AG04449 (cell line): ENCODE measurements at regions of chr9 and their contacts with region 1.

Region 1: GRCh38 chr9:124617471-124618141 is 110.4 kb upstream of the NR5A1 start:
- DNase-seq: no peak
- H3K4me3 ChIP-seq: no peak overlapping the region
- CTCF ChIP-seq: peak; percentile 88

Region 2: DNA sequence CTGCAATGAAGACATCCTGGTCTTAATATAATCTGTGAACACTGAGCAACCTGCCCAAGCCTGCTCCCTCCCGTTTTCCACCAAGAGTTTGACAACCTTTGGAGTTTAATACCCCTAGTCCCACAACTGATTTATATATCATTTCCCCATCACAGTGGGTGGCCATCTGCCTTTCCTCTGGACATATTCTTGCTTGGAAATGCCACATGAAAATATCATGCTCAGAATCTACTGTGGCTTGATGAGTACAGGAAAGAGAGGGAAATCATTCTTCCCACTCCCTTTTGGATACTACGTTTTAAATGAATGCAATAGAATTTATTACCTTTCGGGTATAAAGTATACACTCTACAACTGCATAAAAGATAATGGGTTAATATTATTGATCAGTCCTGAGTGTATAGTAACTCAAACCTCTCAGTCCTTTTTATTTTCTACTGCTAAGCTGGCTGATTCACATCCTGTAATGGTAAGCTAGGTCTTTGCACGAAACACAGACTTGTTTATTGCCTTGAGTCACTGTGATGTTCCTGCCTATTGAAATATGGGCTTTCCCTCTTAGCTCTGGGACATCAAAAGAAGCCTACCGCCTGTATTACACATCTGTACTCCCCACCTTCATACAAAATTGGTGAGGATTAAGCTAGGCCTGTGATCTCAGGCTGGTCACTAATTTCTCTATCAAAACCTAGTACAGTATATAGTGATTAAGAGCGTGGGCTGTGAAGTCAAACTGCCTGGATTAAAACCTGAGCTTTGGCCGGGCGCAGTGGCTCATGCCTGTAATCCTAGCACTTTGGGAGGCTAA is 42.9 kb before region 1 on chr9:
- CTCF ChIA-PET with region 1: interaction called, 23 read pairs
- POLR2A ChIA-PET with region 1: no interaction called
- DNase-seq: peak; percentile 45
- H3K4me3 ChIP-seq: no peak overlapping the region
- CTCF ChIP-seq: no peak

Region 3: DNA sequence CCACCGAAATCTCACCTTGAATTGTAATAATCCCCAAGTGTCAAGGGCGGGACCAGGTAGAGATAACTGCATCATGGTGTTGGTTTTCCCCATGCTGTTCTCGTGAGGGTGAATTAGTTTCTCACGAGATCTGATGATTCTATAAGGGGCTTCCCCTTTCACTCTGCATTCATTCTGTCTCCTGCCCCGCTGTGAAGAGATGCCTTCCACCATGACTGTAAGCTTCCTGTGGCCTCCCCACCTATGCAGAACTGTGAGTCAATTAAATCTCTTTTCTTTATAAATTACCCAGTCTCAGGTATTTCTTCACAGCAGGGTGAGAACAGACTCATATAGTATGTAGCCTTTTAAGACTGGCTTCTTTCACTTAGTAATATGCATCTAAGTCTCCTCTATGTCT is 17.7 kb after region 1 on chr9:
- CTCF ChIA-PET with region 1: interaction called, 82 read pairs
- POLR2A ChIA-PET with region 1: no interaction called
- DNase-seq: no peak
- H3K4me3 ChIP-seq: no peak overlapping the region
- CTCF ChIP-seq: no peak

Region 4: GRCh38 chr9:124688238-124688904 is 70.8 kb after region 1 on chr9:
- CTCF ChIA-PET with region 1: interaction called, 15 read pairs
- POLR2A ChIA-PET with region 1: no interaction called
- DNase-seq: no peak
- H3K4me3 ChIP-seq: no peak overlapping the region
- CTCF ChIP-seq: no peak

Region 5: GRCh38 chr9:124743686-124744348 is 126.2 kb after region 1 on chr9:
- CTCF ChIA-PET with region 1: interaction called, 17 read pairs
- POLR2A ChIA-PET with region 1: no interaction called
- DNase-seq: no peak
- H3K4me3 ChIP-seq: no peak overlapping the region
- CTCF ChIP-seq: no peak

Region 6: DNA sequence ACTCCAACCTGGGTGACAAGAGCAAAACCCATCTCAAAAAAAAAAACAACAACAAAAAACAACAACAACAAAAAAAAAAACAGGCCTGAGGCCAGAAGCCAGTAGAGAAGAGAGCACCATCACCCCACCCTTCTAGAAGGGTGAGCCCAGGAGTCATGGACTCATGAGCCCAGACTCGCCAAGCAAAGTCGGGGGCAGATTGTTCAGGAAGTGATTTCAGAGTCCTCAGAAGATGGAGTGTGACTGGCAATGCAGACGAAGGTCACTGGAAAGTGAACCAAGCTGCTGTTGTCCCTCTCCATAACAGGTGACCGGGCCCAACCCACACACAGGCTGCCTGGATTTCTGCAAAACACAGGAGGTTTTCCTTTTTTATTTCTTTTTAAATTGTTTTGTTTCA is 226.7 kb after region 1 on chr9:
- CTCF ChIA-PET with region 1: no interaction called
- POLR2A ChIA-PET with region 1: no interaction called
- DNase-seq: no peak
- H3K4me3 ChIP-seq: no peak overlapping the region
- CTCF ChIP-seq: no peak